Common myeloid progenitor, CD34-positive (primary cell): ENCODE measurements at regions of chr20 and their contacts with region 1.

Region 1: DNA sequence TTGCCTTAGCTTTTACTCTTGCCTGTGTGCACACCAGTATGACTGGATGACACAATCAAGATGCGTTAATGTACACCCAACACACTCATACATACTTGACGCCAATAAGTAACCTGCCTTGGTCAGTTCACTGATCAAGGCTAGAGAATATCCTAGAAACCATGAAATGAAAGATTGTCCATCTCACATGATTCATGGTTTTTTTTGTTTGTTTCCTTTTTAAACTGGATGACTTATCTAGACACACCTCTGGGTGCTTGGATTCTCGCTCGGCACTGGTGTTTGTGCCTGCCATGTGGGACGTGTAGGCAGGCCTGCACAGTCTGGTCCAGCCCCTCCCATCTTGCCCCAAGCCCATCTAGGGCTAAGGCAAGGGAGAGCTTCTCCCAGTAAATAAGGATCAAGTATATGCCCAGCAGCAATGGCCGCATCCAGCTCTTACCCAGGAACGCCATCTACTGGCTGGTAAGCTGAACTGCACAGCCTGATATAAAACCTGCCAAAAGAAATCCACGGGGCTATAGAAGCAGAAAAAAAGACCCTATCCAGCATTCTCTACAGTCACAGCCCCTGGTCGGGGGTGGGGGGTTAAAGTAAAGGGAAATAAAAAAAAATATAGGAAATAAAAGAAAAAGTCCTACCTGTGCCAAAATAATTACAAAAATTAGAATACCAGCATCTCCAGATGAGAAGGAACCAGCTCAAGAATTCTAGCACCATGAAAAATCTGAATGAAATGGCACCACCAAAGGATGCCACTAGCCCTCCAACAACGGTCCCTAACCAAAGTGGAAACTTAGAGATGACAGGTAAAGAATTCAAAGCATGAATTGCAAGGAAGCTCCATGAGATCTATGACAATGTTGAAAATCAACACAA is 73.3 kb downstream of the OTOR start:
- DNase-seq: peak; percentile 18 to 54 (median 48)
- H3K4me3 ChIP-seq: no peak overlapping the region
- H3K27ac ChIP-seq: no peak overlapping the region
- H3K4me1 ChIP-seq: no peaks in the 10 kb centered on the region
- H3K27me3 ChIP-seq: peaks cover 0 to 2% (median 0%) of the 10 kb centered on the region in 5 experiments

Region 2: DNA sequence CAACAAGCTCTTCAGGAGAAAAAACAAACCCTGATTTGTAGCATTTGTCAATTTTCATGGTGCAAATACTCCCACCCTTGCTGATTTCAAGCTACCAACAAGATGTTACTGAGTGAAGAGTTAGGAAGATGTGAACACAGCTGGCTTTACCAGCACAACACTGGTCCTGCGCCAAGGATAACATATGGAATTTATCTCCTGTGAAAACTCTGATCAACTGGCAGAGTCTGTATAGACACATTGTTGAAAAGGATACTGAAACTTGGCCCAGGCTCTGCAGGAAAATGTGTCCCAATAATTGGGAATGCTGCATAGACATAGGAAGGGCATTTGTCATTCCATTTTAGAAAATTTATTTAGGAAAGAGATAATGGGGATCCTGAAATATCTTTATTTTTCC is 44.3 kb before region 1 on chr20:
- CTCF ChIA-PET with region 1: no interaction called
- POLR2A ChIA-PET with region 1: no interaction called
- DNase-seq: no peak
- H3K4me3 ChIP-seq: no peak overlapping the region
- H3K27ac ChIP-seq: no peak overlapping the region
- H3K4me1 ChIP-seq: no peaks in the 10 kb centered on the region
- H3K27me3 ChIP-seq: no peaks in the 10 kb centered on the region

Region 3: DNA sequence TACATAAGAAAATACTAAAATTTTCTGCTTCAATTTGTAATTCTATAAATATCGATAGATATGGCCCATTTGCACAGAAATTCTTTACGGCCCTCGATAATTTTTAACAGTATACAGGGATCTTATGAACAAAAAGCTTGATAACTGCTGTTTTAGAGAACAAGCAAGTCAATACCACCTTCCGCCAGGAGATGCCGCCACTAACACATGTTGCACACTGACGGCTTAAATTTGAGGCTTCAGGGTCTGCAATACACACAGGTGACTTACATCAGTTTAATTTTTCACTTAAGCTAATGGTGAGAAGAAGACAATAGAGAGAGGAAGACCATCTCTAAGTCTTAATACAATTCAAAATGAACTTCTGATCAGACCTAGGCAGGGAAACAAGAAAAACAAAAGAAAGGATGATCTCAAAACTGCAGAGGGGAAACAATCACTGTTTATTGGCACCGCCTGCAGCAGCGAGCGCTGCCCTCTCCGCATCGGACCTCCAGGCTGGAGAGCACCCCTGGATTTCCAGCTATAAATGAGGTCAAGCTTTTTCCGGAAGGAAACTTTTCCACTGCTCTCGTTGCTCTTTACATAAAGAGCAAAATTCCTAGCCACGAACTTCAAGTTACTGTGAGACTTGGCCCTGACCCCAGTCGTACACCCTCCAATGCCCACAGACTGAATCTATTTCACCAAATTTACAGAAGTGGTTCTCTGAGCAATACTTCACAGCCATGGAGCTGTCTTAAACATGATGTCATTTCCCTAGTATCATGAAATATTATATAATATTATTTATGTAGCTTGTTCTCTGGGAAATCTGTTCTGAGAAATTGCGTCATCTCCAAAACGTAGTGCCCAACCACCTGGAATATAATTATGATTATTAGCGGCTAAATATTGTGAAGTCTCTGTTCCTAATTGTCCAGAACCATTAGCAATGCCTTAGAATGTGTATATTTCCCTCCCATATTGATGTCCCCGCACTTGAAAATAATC is 19.2 kb before region 1 on chr20:
- CTCF ChIA-PET with region 1: interaction called, 40 read pairs
- POLR2A ChIA-PET with region 1: no interaction called
- DNase-seq: peak; percentile 39 to 65 (median 54)
- H3K4me3 ChIP-seq: no peak overlapping the region
- H3K27ac ChIP-seq: no peak overlapping the region
- H3K4me1 ChIP-seq: no peaks in the 10 kb centered on the region
- H3K27me3 ChIP-seq: peaks cover 2 to 33% (median 8%) of the 10 kb centered on the region in 5 experiments

Region 4: GRCh38 chr20:16810216-16810615 is 11.2 kb before region 1 on chr20:
- CTCF ChIA-PET with region 1: interaction called, 40 read pairs
- POLR2A ChIA-PET with region 1: interaction called, 3 read pairs
- DNase-seq: no peak
- H3K4me3 ChIP-seq: no peak overlapping the region
- H3K27ac ChIP-seq: no peak overlapping the region
- H3K4me1 ChIP-seq: no peaks in the 10 kb centered on the region
- H3K27me3 ChIP-seq: peaks cover 0 to 24% (median under 1%) of the 10 kb centered on the region in 5 experiments

Region 5: GRCh38 chr20:16864069-16864468 is 42.6 kb after region 1 on chr20:
- CTCF ChIA-PET with region 1: no interaction called
- POLR2A ChIA-PET with region 1: no interaction called
- DNase-seq: no peak
- H3K4me3 ChIP-seq: no peak overlapping the region
- H3K27ac ChIP-seq: no peak overlapping the region
- H3K4me1 ChIP-seq: no peaks in the 10 kb centered on the region
- H3K27me3 ChIP-seq: no peaks in the 10 kb centered on the region

Region 6: GRCh38 chr20:16885746-16886145 is 64.3 kb after region 1 on chr20:
- CTCF ChIA-PET with region 1: no interaction called
- POLR2A ChIA-PET with region 1: no interaction called
- DNase-seq: no peak
- H3K4me3 ChIP-seq: no peak overlapping the region
- H3K27ac ChIP-seq: no peak overlapping the region
- H3K4me1 ChIP-seq: no peaks in the 10 kb centered on the region
- H3K27me3 ChIP-seq: no peaks in the 10 kb centered on the region